Aorta (tissue), 5 donors: ENCODE measurements at regions of chr4 and their contacts with region 1.

Region 1: DNA sequence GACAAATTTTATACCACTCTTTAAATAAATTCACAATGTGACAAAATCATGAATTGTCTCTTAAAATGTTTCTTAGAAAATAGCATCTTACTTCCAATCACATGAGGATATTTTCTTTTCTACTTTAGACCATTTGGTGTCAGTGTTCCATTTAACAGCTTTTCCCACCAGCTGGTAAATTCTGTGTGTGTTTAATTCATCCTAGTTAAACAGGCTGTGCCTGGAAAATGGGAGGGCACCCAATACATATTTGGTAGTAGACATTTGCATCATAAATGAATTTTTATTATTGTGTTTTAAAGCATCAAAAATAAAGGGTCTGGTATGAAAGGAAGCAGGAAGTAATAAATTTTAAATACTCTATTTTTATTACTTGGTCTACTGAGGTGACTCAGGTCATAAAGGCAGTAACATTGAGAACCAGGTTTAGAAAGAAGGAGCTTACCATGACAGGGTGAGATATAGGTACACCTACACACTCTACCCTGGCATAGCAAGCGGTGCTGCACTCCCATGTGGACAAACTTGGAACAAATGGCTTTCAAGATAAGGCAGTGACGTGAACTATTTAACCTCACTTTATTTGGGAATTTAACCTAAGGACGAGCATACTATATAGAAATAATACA is 344.5 kb downstream of the BMPR1B start:
- DNase-seq: no peak
- ATAC-seq: no peak
- H3K4me3 ChIP-seq: no peak overlapping the region
- H3K27ac ChIP-seq: no peak overlapping the region
- H3K4me1 ChIP-seq: peaks cover 0 to 2% of the 10 kb centered on the region in 2 donors
- H3K27me3 ChIP-seq: no peaks in the 10 kb centered on the region

Region 2: GRCh38 chr4:94629837-94630236 is 472.4 kb before region 1 on chr4:
- intact Hi-C with region 1: loop called in 1 of 2 experiments (anchors 5 kb)
- DNase-seq: no peak
- ATAC-seq: no peak
- H3K4me3 ChIP-seq: no peak overlapping the region
- H3K27ac ChIP-seq: no peak overlapping the region
- H3K4me1 ChIP-seq: peaks cover 0 to 6% of the 10 kb centered on the region in 2 donors
- H3K27me3 ChIP-seq: no peaks in the 10 kb centered on the region